ENCODE measurements at regions of chr10 and their contacts with region 1.

Region 1: GRCh38 chr10:50379616-50380015 is 128.3 kb upstream of the ASAH2 start:
- DNase-seq: no peak
- H3K4me3 ChIP-seq: no peak overlapping the region
- CTCF ChIP-seq: no peak
- POLR2A ChIP-seq: no peak

Region 2: GRCh38 chr10:50367732-50368131 is 11.9 kb before region 1 on chr10:
- intact Hi-C with region 1: loop called (anchors 1 kb)
- DNase-seq: no peak
- H3K4me3 ChIP-seq: no peak overlapping the region
- CTCF ChIP-seq: no peak
- POLR2A ChIP-seq: no peak

Measured in lower leg skin (tissue), 4 donors.